Left ventricle myocardium superior (tissue), 1 donor: ENCODE measurements at regions of chr7 and their contacts with region 1.

Region 1: GRCh38 chr7:32347244-32347828 is 142.8 kb downstream of the LSM5 start:
- DNase-seq: no peak
- ATAC-seq: no peak

Region 2: GRCh38 chr7:32212321-32212720 is 135.0 kb before region 1 on chr7:
- intact Hi-C with region 1: loop called (anchors 5 kb)
- DNase-seq: no peak
- ATAC-seq: no peak

Region 3: DNA sequence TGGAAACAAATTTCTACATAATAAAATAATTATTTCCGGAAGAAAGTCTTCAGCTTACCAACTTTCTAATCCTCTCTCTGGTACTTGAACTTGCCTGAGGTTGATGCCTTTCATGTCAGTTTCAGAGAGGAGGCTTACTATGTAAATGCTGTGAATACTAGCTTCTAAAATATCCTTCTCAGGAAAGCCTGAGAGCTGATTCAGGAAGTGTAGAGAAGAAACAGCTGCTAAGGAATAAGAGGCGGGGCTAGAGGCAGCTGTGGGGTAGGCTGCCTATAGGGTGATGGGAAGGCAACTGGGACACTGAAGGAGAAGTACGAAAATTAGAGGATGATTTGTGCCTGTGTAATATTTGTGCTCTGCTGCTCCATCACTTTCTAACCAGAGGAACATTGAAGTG is 217.2 kb after region 1 on chr7:
- intact Hi-C with region 1: no loop called
- DNase-seq: no peak
- ATAC-seq: peak; percentile 66